Posterior vena cava (tissue), 2 donors: ENCODE measurements at regions of chr11 and their contacts with region 1.

Region 1: DNA sequence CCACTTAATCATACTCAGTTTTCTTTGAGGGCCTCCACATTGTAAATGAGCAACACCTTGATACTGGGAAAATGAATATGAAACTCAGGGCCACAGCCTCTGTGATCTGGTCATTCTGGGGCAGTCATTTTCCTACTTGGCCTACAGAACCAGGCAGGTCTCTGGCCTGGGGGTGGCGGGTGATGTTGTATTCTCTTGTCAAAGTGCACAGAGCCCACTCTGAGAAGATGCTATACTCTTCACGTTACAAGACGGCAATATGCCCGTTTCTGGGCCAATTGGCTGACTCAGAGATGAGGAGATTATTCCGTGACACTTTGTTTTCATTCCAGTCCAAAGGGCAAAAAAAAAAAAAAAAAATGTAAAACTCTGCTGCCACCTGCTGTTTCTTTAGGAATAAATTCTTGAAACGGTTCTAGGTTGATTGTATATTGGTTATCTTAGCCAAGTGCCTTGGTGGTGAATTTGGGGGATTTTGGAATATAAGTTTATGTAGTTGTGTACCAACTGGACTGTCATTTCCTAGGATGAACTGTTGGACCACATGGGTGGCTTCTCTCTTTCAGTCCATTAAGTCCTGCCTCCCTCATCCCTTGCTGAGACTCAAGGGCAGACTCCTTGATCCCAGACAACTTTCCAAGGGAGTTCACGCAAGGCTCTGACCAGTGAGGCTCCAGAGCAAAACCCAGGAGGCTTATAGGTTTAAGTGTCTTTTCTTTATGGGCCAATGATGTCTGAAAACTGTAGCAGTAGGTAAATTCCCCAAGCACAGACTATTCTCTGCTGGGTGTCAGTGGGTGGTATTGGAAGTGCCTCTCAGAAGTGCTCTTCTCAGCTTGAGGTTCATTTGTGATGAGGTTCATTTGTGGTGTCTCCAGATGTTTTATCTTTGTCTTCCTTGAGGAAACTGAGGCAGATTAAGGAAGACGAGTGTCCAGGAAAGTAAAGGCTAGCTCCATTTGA is 18.2 kb downstream of the ADM start:
- DNase-seq: no peak

Region 2: DNA sequence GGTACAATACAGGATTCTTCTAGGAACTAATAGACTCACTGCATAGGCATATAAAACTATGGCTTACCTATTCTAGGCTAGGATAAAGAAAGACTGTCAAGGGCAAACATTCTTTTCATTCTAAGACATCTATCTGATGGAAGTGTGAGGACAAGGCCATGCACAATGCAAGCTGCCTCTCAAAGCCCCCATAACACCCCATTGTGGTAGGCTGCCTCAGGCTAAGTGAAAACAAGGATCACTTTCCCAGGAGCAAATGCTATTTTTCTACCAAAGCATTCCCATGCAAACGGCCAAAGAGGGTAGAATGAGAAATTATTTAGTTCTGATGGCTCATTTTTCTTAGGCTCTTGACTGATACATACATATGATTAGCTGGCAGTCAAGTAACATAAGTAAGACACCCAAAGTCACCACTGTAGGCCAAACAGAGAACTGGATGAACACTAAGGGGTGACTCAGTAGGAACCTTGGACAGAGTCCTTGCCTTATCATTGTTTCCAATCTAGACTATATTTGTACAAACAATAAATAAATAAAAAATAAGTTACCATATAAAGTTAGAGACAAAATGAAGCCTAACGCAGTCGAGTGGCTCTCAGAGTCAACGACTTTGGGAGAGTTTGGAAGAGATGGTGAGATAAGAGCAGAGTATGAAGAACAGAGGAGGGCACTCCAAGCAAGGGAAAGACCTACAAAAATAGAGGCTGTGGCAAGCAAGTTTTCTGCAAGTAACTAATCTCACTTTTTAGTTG is 332.7 kb before region 1 on chr11:
- intact Hi-C with region 1: loop called in 1 of 2 experiments (anchors 5 kb)
- DNase-seq: no peak